ENCODE measurements at regions of chr6 and their contacts with region 1.

Region 1: GRCh38 chr6:11585426-11586016 is 48.0 kb downstream of the TMEM170B start:
- DNase-seq: peak; percentile 60
- H3K4me3 ChIP-seq: no peak overlapping the region
- H3K27ac ChIP-seq: no peak overlapping the region
- H3K4me1 ChIP-seq: no peaks in the 10 kb centered on the region
- H3K27me3 ChIP-seq: no peaks in the 10 kb centered on the region
- CTCF ChIP-seq: peak; percentile 74

Region 2: DNA sequence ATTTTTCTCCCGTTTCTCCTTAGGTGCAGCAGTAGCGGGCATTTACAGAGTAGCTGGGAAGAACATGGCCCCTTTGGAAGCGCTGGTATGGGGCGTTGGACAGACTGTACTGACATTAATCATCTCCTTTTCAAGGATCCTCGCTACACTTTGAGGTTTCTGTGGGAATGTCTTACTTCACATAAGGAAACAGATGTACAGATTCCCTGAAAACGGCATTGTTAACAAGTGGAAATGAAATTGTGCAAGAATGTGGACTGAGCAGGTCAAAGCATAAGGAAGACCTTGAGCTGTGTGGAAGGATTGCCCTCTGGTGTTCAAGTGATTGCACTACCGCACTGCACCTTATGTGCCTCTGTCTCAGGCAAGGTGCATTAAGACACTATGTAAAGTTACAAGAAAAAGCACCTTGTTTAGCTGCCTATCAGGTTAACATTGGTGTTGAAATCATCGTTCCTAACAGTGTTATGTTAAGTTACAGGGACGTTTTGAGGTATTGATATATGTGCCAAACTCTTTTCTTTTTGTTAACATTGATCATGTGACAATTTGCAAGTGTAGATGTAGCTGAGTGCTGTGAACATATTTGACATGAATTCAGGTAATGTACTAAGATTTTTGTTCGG is 10.0 kb before region 1 on chr6:
- CTCF ChIA-PET with region 1: interaction called, 14 read pairs
- POLR2A ChIA-PET with region 1: no interaction called
- intact Hi-C with region 1: no loop called
- DNase-seq: peak; percentile 80
- H3K4me3 ChIP-seq: no peak overlapping the region
- H3K27ac ChIP-seq: no peak overlapping the region
- H3K4me1 ChIP-seq: peaks cover 7% of the 10 kb centered on the region
- H3K27me3 ChIP-seq: no peaks in the 10 kb centered on the region
- CTCF ChIP-seq: peak; percentile 92

Region 3: DNA sequence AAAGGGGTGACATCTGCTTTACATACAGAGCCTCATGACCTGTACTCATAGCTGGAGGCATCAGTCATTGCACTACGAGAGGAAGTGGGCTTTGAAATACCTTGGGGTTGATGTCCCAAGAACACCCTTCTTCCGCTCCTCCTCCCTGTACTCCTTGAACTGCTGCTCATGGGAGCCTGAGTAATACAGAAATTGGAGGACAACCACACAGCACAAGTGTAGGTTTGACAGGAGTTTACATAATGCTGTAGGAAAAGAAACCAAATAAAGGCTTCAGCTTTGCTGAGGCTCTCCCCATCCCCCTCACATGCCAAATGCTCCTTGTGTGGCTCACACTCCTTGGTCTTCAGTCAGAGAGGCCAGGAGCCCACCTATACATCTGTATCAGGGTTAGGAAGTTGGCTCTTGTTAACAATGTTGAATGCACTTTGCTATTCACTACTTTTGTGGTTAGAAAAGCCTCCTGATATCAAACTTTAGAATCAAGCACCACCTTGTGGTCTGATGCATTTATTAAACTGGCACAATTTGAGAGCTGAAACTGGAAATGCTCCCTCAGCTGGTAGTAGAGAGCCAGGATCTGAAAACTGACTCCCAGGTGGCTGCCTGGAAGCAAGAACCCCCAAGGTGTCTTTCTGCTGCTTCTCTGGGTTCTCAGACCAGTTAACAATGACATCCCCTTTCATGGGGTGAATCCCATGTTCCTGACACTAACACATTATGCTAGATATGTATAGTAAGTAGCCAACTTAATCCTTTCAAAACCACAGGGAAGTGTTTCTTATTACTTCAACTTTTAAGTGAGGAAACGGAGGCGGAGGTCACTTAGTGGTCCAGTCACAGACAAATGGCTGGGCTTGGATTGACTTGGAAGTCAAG is 648.4 kb after region 1 on chr6:
- CTCF ChIA-PET with region 1: no interaction called
- POLR2A ChIA-PET with region 1: no interaction called
- intact Hi-C with region 1: loop called (anchors 5 kb)
- DNase-seq: peak; percentile 75
- H3K4me3 ChIP-seq: no peak overlapping the region
- H3K27ac ChIP-seq: no peak overlapping the region
- H3K4me1 ChIP-seq: no peaks in the 10 kb centered on the region
- H3K27me3 ChIP-seq: no peaks in the 10 kb centered on the region
- CTCF ChIP-seq: peak; percentile 83

Region 4: DNA sequence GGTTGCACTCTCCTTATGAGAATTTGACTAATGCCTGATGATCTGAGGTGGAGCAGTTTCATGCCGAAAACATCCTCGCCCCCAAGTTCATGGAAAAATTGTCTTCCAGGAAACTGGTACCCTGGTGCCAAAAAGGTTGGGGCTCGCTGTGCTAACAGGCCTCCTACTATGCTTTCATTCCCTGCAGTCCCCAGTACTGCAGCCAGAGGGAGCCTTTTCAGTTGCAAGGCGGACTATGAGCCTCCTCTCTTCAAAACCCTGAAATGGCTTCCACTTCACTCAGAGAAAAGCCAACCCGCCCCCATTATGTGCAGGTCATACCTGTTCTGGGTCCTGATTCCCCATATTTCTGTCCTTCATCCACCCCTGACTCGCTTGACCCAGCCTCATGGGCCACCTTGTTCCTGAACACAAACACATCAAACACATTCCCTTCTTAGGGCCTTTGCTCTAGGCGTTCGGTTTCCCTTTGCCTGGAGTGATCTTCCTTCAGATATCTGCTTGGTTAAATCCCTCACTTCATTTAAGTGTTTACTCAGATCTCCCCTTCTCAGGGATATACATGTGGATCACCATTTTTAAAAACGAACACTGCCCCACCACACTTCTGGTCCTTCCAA is 1304.8 kb after region 1 on chr6:
- CTCF ChIA-PET with region 1: no interaction called
- POLR2A ChIA-PET with region 1: no interaction called
- intact Hi-C with region 1: loop called (anchors 10 kb)
- DNase-seq: peak; percentile 40
- H3K4me3 ChIP-seq: no peak overlapping the region
- H3K27ac ChIP-seq: no peak overlapping the region
- H3K4me1 ChIP-seq: peaks cover 12% of the 10 kb centered on the region
- H3K27me3 ChIP-seq: no peaks in the 10 kb centered on the region
- CTCF ChIP-seq: peak; percentile 65

Measured in A673 (cell line).